K562 (cell line): ENCODE measurements at regions of chr5 and their contacts with region 1.

Region 1: DNA sequence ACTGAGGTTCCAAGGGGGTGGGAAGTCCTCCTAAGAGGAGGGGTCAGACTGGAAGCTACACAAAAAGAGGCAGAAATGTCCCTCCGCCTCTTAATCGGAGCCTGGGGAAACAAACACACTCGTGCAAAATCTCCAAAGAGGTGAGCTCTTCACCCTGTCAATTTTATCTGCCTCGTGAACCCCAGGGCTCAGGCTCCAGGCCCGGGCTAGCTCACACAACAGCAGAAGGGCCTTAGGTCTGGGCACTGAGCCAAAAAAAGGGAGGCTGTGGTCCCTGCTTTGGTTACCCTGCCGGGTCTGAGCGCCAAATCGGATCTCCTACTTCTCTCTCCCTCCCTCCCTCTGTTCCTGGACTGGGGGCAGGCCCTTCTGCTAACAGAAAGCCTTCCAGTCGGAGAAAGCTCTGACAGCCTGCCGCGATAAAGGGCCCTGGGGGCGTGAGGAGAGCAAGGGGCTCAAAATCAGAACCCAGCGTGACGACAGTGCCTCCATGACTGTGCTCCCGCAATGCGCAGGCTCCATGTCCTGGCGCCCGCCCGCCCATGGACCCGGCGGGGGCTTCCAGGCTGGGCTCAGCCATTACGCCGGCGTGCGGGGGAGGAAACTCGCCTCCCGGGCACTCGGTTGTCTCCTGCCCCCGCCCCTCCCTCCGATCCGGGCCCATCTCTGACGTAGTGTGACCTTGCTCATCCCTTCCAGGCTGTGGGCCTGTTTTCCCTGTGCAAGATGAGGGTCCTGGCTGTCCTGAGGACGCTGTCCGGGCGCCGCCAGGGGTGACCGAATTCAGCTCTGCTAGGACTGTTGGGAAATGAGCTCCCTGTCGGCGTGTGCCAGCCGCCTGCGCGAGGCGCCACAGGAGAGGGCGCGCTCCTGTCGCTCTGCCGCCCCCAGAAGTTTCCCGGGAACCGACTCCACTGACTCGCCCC is 865 bp upstream of the SLC22A4 start:
- DNase-seq: peak; percentile 86 to 96 (median 90)
- ATAC-seq: peak; percentile 67
- H3K4me3 ChIP-seq: peak overlapping the region; percentile 61
- H3K27ac ChIP-seq: peak overlapping the region; percentile 96
- H3K4me1 ChIP-seq: peaks cover 35 to 46% of the 10 kb centered on the region in 2 experiments; a peak in 4 of 5 replicates
- H3K27me3 ChIP-seq: no peaks in the 10 kb centered on the region
- CTCF ChIP-seq: peak in 2 of 3 experiments; percentile 21 to 22; a peak in 2 of 6 replicates
- EP300 ChIP-seq: peak; percentile 2; the same call in 1 of the 2 replicates
- POLR2A ChIP-seq: no peak; the same call in 1 of the 2 replicates
- RAD21 ChIP-seq: peak; percentile 9 to 30; a peak in 1 of 4 replicates

Region 2: GRCh38 chr5:132142459-132142858 is 150.9 kb before region 1 on chr5:
- CTCF ChIA-PET with region 1: no interaction called
- POLR2A ChIA-PET with region 1: no interaction called
- in situ Hi-C with region 1: no loop called
- intact Hi-C with region 1: no loop called
- DNase-seq: no peak
- ATAC-seq: no peak
- H3K4me3 ChIP-seq: no peak overlapping the region
- H3K27ac ChIP-seq: no peak overlapping the region
- H3K4me1 ChIP-seq: peaks cover 0 to 1% of the 10 kb centered on the region in 2 experiments; a peak in 3 of 5 replicates
- H3K27me3 ChIP-seq: no peaks in the 10 kb centered on the region
- CTCF ChIP-seq: no peak
- EP300 ChIP-seq: no peak
- POLR2A ChIP-seq: no peak
- RAD21 ChIP-seq: no peak

Region 3: DNA sequence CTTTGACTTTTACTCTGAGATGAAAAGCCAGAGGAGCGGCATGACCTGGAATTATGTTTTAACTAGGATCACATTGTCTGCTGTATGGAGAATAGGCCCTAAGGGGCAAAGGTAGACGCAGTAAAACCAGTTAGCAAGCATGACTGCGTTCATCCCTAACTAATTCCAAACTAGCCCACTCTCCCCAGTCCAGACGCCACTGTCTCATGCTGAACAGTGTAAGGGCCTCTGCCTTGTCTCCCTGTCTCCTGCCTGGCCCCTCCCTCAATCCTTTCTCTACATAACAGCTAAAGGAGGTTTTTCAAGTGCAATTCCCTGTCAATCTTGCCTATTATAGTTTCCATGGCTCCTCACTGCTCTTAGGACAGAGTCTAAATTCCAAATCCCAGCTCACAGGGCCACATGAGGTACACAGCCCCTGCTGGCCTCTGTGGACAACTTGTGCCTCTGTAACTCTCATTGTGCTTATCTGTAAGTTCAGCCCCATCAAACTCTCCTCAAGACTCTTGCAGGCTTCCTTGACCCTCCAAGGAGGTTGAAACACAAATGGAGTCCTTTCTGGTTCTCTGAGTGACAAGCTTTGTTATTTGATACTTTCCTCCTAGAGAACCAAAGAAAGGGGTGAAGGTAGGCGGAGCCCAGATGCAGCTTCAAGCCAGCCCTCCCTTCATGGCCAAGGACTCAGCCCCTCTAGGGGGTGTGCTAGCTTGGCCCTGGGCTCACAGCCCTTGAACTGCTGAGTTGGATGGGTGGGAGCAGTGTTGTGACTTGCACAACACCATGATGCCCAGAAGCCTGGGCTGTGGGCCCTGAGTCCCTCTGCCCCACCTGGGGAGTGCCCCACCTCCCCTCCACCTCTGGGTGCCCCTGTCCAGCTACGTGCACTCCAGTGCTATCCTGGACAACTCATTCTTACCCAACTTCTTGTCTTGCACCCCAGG is 15.1 kb before region 1 on chr5:
- CTCF ChIA-PET with region 1: no interaction called
- POLR2A ChIA-PET with region 1: interaction called, 26 read pairs
- in situ Hi-C with region 1: no loop called
- intact Hi-C with region 1: loop called (anchors 1 kb)
- DNase-seq: peak; percentile 66 to 90 (median 78)
- ATAC-seq: peak; percentile 89
- H3K4me3 ChIP-seq: no peak overlapping the region
- H3K27ac ChIP-seq: peak overlapping the region; percentile 52
- H3K4me1 ChIP-seq: peaks cover 40 to 44% of the 10 kb centered on the region in 2 experiments; a peak in 4 of 5 replicates
- H3K27me3 ChIP-seq: no peaks in the 10 kb centered on the region
- CTCF ChIP-seq: 0 out of 6 replicates have a peak, but pooled peaks have one; percentile 8 to 25 (median 20)
- EP300 ChIP-seq: no peak
- POLR2A ChIP-seq: no peak
- RAD21 ChIP-seq: 0 out of 4 replicates have a peak, but pooled peaks of 1 of the 2 experiments have one; percentile 18

Region 4: GRCh38 chr5:132310141-132310834 is 17.0 kb after region 1 on chr5:
- CTCF ChIA-PET with region 1: no interaction called
- POLR2A ChIA-PET with region 1: interaction called, 14 read pairs
- in situ Hi-C with region 1: no loop called
- intact Hi-C with region 1: loop called (anchors 1 kb)
- DNase-seq: peak in 1 of 4 experiments; percentile 62
- ATAC-seq: peak; percentile 33
- H3K4me3 ChIP-seq: no peak overlapping the region
- H3K27ac ChIP-seq: peak overlapping the region; percentile 37; the same call in 1 of the 3 replicates
- H3K4me1 ChIP-seq: peaks cover 53 to 63% of the 10 kb centered on the region in 2 experiments
- H3K27me3 ChIP-seq: no peaks in the 10 kb centered on the region
- CTCF ChIP-seq: no peak
- EP300 ChIP-seq: no peak
- POLR2A ChIP-seq: no peak
- RAD21 ChIP-seq: no peak